ENCODE measurements at regions of chr15 and their contacts with region 1.

Region 1: GRCh38 chr15:69058830-69059556 is 44.5 kb downstream of the NOX5 start:
- DNase-seq: peak; percentile 22
- H3K4me3 ChIP-seq: no peak overlapping the region
- H3K27me3 ChIP-seq: no peaks in the 10 kb centered on the region
- CTCF ChIP-seq: peak; percentile 79

Region 2: DNA sequence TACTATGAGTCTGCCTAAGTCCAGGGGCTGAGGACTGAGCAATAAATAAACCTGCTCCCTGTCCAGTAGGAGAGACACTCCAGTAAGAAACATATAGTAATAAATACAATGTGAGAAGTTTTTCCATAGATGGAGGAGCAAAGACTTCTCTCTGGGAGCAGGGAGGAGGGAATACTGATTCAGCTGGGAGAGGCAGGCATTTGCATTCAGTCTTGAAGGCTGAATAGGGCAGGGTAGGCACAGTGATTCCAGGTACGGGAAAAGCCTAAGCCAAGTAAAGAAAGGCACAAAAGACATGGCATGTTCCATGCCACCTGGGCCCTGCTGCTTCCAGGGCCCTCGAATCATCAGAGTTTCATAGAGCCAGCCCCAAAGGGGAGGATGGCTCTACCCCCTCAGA is 41.8 kb after region 1 on chr15:
- CTCF ChIA-PET with region 1: no interaction called
- POLR2A ChIA-PET with region 1: no interaction called
- DNase-seq: no peak
- H3K4me3 ChIP-seq: no peak overlapping the region
- H3K27me3 ChIP-seq: peaks cover 22% of the 10 kb centered on the region
- CTCF ChIP-seq: no peak

Region 3: DNA sequence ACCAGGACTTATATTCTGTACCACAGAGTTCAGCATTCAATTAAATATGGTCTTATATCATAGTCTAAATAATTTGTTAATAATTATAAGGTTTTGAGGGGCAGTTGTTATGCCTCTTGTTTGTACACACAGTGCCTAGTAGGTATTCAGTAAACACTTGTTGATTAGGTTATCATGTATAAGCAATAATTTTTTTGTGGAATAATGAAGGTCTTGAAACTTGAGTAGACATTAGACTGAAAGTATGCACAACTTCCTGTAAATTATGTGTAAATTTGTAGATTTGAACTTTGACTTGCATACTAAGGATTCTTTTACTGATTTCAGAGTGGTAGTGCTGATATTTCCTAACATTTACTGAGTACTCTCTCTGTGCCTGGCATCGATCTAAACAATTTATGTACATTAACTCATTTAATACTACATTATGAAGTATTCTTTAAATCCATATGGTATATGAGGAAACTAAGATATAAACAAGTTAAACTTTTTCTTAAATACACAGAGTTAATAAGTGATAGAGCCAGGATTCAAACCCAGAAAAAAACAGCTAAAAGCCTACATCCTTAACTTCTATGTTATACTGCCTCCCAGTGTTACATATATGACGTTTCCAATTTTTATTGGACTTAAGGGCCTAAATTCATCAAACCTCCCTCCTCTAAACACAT is 166.5 kb after region 1 on chr15:
- CTCF ChIA-PET with region 1: interaction called, 41 read pairs
- POLR2A ChIA-PET with region 1: no interaction called
- DNase-seq: peak; percentile 1
- H3K4me3 ChIP-seq: no peak overlapping the region
- H3K27me3 ChIP-seq: no peaks in the 10 kb centered on the region
- CTCF ChIP-seq: 0 out of 2 replicates have a peak, but pooled peaks have one; percentile 21